ENCODE measurements at regions of chr3 and their contacts with region 1.

Region 1: GRCh38 chr3:12810013-12810780 is 13.7 kb downstream of the CAND2 start:
- DNase-seq: peak; percentile 12
- H3K4me3 ChIP-seq: peak overlapping the region; percentile 62
- CTCF ChIP-seq: peak; percentile 86

Region 2: DNA sequence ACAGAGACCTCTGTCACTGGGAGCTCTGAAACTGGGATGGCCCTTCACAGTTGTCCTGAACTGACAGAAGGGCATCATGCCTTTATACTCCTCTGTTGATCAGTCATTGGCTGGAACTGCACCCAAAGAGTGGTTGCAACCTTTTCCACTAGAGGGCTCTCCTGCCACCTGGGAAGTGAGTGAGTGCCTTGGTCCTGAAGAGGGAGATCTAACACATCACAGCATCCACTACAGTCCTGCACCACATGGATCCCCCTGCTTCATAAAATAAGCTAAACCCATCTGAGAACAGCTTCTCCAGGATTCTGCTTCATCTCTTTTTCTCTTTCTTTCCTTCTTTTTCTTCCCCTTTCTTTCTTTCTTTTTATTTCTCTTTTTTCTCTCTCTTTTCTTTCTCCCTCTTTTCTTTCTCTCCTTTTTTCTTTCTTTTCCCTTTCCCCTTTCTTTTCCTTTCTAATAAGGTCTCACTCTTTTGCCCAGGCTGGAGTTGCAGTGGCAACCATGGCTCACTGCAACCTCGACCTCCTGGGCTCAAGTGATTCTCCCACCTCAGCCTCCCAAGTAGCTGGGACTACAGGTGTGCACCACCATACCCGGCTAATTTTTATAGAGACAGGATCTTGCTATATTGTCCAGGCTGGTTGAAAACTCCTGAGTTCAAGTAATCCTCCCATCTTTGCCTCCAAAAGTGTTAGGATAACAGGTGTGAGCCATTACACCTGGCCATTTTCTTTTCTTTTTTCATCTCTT is 103.5 kb before region 1 on chr3:
- CTCF ChIA-PET with region 1: interaction called, 21 read pairs
- POLR2A ChIA-PET with region 1: no interaction called
- DNase-seq: no peak
- H3K4me3 ChIP-seq: no peak overlapping the region
- CTCF ChIP-seq: peak; percentile 79

Region 3: DNA sequence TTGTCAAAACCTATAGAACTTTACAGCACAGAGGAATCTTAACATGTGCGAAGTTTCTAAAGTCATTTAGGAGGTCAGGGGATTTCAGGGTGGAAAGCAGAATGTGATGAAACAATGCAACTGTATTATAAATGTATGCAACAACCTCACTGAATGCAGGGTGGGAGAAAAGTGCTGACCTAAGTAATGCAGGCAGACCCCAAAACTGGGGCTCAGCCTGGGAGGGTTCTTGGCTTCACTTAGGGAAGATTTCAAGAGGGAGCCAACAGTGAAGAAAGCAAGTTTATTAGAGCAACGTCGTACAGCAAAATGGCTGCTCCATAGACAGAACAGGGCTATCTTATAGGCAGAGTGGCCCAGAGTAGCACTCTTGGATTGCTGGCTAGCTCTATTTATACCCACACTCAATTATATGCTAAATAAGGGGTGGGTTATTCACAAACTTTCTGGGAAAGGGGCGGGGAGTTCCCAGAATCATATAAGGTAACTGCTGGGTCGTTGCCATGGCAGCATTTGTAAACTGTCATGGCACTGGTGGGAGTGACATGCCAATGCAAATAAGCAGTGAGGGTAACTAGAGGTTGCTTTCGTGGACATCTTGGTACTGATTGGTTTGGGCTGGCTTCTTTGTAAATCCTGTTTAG is 27.9 kb before region 1 on chr3:
- CTCF ChIA-PET with region 1: interaction called, 21 read pairs
- POLR2A ChIA-PET with region 1: no interaction called
- DNase-seq: no peak
- H3K4me3 ChIP-seq: no peak overlapping the region
- CTCF ChIP-seq: no peak

Region 4: DNA sequence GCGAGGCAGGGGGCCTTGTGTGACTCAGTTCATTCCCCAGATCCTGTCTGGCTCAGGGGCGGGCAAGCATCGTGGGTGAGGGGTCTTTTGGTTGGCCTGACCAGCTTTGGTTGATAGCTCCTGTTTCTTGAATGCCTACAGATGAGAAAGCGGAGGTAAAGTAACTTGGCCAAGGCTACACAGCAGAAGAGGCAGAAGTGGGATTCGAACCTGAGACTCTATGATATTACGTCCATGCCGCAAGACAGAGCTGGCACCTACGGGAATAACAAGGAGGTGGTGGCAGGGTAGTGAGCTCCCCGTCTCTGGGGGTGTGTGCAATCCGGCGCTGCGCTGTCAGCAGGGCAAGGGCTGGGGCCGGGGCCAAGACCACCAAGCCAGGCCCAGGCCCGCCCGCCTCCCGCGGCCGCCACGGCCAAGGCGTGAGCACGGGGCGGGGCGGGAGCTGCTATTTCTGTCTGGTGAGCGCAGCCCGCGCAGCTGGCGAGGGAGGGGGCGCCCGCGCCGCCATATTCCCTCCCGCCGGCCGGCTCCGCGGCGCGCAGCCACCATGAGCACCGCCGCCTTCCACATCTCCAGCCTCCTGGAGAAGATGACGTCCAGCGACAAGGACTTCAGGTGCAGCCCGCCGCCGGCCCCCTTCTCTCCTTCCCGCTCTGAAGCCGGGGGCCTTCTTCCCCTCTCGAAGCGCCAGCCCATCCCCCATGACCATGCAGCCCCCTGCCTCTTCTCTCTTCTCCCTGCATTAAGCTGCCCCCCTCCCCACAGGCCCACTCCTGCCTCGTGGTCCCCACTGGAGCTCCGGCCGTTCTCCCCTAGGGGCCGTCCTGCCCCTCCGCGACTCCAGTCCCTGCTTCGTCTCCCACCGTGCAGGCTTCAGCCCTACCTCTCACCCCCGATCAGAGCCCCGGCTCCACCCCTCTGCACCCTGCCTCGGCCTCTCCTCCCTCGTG is 13.8 kb before region 1 on chr3 and contains the start of gene CAND2:
- CTCF ChIA-PET with region 1: interaction called, 49 read pairs
- POLR2A ChIA-PET with region 1: interaction called, 3 read pairs
- DNase-seq: no peak
- H3K4me3 ChIP-seq: peak within 1 kb of the TSS; percentile 69
- CTCF ChIP-seq: no peak

Region 5: GRCh38 chr3:12822725-12823373 is 12.7 kb after region 1 on chr3:
- CTCF ChIA-PET with region 1: interaction called, 20 read pairs
- POLR2A ChIA-PET with region 1: no interaction called
- DNase-seq: no peak
- H3K4me3 ChIP-seq: no peak overlapping the region
- CTCF ChIP-seq: no peak

Region 6: GRCh38 chr3:12830785-12831156 is 20.6 kb after region 1 on chr3:
- CTCF ChIA-PET with region 1: interaction called, 20 read pairs
- POLR2A ChIA-PET with region 1: interaction called, 3 read pairs
- DNase-seq: no peak
- H3K4me3 ChIP-seq: no peak overlapping the region
- CTCF ChIP-seq: no peak

Region 7: GRCh38 chr3:13022348-13023234 is 212.4 kb after region 1 on chr3:
- CTCF ChIA-PET with region 1: no interaction called
- POLR2A ChIA-PET with region 1: no interaction called
- DNase-seq: peak; percentile 24
- H3K4me3 ChIP-seq: peak overlapping the region; percentile 24
- CTCF ChIP-seq: no peak

Measured in AG04449 (cell line).